ENCODE measurements at regions of chr14 and their contacts with region 1.

Region 1: DNA sequence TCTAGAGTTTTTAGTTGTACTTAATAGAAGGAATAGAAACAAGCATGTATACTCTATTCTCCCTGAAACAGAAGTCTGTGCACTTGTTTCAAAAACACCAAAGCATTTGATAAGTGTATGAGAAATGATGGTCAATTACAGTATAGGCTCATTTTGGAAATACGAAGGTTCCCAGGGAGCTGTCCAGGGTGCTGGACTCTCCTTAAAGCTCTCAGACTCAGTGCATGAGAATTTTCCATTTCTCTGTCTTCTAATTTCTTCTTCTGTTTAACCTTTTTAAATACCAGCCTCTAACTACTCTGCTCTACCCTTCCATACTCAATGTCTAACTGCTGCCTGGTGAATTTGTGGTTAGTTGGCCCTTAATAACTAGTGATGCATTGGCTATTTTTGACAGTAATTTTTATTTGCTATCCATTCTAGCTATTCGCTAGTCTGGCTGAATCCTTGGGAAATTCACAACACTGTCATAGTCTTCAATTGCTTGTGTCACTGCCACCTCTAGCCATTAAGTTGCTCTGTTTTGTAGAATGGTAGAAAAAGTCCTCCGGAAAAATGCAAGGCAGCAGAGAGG is 229.2 kb downstream of the NRXN3 start:
- DNase-seq: peak in 1 of 2 experiments; percentile 45
- H3K4me3 ChIP-seq: no peak overlapping the region
- H3K4me3 Mint-ChIP-seq: no peak overlapping the region
- H3K27ac Mint-ChIP-seq: no peak overlapping the region
- H3K4me1 ChIP-seq: no peaks in the 10 kb centered on the region
- H3K4me1 Mint-ChIP-seq: no peaks in the 10 kb centered on the region
- H3K27me3 ChIP-seq: no peaks in the 10 kb centered on the region
- H3K27me3 Mint-ChIP-seq: peaks cover 3% of the 10 kb centered on the region
- CTCF ChIP-seq: no peak

Region 2: DNA sequence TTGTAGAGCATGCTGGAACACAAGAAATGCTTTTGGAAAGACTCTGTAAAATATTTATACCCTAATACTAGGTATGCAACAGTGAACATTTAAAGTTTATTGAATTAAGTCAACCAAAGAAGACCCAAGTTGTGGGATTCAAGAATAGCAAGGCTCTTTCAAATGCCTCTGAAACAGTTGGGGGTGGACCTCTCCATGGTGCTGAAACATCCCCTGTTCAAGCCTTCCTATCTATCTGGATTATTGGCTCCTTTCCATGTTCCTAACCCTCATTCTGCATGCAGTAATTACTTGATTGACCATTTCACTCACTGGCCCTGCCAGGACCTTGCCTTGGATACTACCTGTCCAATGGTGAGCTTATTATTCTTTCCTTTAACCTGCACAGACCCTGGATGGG is 120.5 kb after region 1 on chr14:
- CTCF ChIA-PET with region 1: no interaction called
- POLR2A ChIA-PET with region 1: no interaction called
- intact Hi-C with region 1: loop called (anchors 1 kb)
- DNase-seq: peak; percentile 43 to 60
- H3K4me3 ChIP-seq: no peak overlapping the region
- H3K4me3 Mint-ChIP-seq: no peak overlapping the region
- H3K27ac Mint-ChIP-seq: no peak overlapping the region
- H3K4me1 ChIP-seq: no peaks in the 10 kb centered on the region
- H3K4me1 Mint-ChIP-seq: no peaks in the 10 kb centered on the region
- H3K27me3 ChIP-seq: no peaks in the 10 kb centered on the region
- H3K27me3 Mint-ChIP-seq: no peaks in the 10 kb centered on the region
- CTCF ChIP-seq: no peak

Region 3: GRCh38 chr14:78598041-78598920 is 198.9 kb after region 1 on chr14:
- CTCF ChIA-PET with region 1: no interaction called
- POLR2A ChIA-PET with region 1: no interaction called
- intact Hi-C with region 1: no loop called
- DNase-seq: peak; percentile 51 to 63
- H3K4me3 ChIP-seq: no peak overlapping the region
- H3K4me3 Mint-ChIP-seq: no peak overlapping the region
- H3K27ac Mint-ChIP-seq: no peak overlapping the region
- H3K4me1 ChIP-seq: no peaks in the 10 kb centered on the region
- H3K4me1 Mint-ChIP-seq: no peaks in the 10 kb centered on the region
- H3K27me3 ChIP-seq: no peaks in the 10 kb centered on the region
- H3K27me3 Mint-ChIP-seq: peaks cover 13% of the 10 kb centered on the region
- CTCF ChIP-seq: peak; percentile 78 to 93